Naive thymus-derived CD4-positive, alpha-beta T cell (primary cell): ENCODE measurements at regions of chr15 and their contacts with region 1.

Region 1: GRCh38 chr15:55407949-55408791 is at the starts of genes CCPG1 and PIERCE2:
- DNase-seq: peak; percentile 80 to 89 (median 85)
- ATAC-seq: peak; percentile 95
- H3K4me3 ChIP-seq: peak within 1 kb of the TSS; percentile 70
- H3K4me3 Mint-ChIP-seq: peak within 1 kb of the TSS; percentile 88 to 97 (median 94)
- H3K27ac ChIP-seq: peak within 1 kb of the TSS; percentile 86
- H3K27ac Mint-ChIP-seq: peak within 1 kb of the TSS; percentile 82 to 97 (median 89)
- H3K4me1 ChIP-seq: peaks cover 12 to 20% of the 10 kb centered on the region in 2 donors
- H3K4me1 Mint-ChIP-seq: peaks cover 18 to 52% (median 37%) of the 10 kb centered on the region in 7 donors
- H3K27me3 ChIP-seq: no peaks in the 10 kb centered on the region
- H3K27me3 Mint-ChIP-seq: peaks cover 0 to 2% (median 0%) of the 10 kb centered on the region in 5 donors
- total RNA-seq, gene CCPG1: 17.9 to 40.9 (median 28.4) TPM
- total RNA-seq, gene PIERCE2: 0.42 TPM in 1 of 5 experiments, not detected in the others

Region 2: DNA sequence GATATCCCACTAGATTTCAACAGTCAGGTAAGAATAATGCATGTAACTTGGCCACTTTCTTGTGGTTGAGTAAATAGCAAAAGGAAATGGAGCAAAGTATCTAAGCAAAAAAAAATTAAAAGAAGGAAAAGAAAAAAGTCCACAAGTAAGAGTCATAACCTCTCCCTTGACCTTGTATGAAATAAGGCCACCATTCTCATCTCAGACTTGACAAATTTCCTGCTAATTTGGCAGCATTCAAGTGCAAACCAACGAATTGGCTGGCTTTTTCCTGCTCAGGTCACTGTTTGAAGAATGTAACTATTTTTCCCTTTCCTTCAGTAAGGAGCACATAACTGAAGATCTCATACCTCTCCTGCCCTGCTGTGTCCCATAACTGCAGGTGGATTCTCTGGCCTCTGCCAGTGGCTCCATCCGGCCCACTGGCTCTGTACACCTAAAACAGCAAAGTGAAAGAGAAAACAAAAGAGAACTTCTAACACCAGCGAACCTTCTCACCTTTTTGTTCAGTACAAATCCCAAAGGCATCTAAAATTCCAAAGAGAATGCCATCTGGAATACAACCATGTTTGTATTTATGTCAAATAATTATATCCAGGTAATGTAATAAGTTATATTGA is 178.0 kb before region 1 on chr15:
- CTCF ChIA-PET with region 1: no interaction called
- POLR2A ChIA-PET with region 1: no interaction called
- intact Hi-C with region 1: no loop called
- DNase-seq: no peak
- ATAC-seq: no peak
- H3K4me3 ChIP-seq: no peak overlapping the region
- H3K4me3 Mint-ChIP-seq: peak overlapping the region in 2 of 10 donors; percentile 22 to 62
- H3K27ac ChIP-seq: no peak overlapping the region
- H3K27ac Mint-ChIP-seq: peak overlapping the region in 4 of 9 donors; percentile 9 to 61 (median 24)
- H3K4me1 ChIP-seq: peaks cover 3 to 15% of the 10 kb centered on the region in 2 donors
- H3K4me1 Mint-ChIP-seq: peaks cover 8 to 37% (median 16%) of the 10 kb centered on the region in 7 donors
- H3K27me3 ChIP-seq: no peaks in the 10 kb centered on the region
- H3K27me3 Mint-ChIP-seq: no peaks in the 10 kb centered on the region

Region 3: DNA sequence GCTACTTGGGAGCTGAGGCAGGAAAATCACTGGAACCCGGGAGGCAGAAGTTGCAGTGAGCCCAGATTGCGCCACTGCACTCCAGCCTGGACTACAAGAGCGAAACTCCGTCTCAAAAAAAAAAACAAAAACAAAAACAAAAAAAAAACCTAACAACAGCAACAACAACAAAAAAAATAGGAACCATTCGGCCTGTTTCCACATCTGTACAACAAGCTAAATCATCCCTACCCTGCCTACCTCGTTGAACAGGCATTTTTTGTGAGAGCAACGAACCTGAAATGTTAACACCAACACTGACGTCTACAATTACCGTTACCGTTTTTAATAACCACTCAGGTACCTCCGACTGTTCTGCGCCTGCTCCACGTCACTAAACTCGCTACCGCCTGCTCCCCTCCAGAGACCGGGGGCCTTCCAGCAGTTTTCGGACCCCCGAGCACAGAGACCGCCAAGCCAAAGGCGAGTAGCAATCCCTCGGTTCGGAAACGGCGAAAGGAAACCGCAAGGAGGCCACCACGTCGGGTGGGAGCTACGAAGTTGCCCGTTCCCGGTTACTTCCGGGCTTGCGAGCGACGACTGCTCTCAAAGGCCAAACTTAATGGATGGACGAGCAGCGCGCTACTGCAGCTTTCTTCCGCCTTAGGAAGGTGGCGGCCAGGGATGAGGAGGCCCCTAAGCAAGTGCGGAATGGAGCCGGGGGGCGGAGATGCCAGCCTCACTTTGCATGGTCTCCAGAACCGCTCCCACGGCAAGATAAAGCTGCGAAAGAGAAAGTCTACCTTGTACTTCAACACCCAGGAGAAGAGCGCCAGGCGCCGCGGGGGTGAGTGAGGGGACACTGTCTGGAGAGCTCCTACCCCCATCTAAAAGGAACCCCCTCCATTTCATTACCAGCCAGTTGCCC is 89.3 kb before region 1 on chr15 and contains the starts of genes PIGB and PIGBOS1:
- CTCF ChIA-PET with region 1: interaction called, 3 read pairs
- POLR2A ChIA-PET with region 1: interaction called, 13 read pairs
- intact Hi-C with region 1: loop called (anchors 1 kb)
- DNase-seq: peak; percentile 73 to 88 (median 84)
- ATAC-seq: peak; percentile 91
- H3K4me3 ChIP-seq: peak within 1 kb of the TSS; percentile 95
- H3K4me3 Mint-ChIP-seq: peak within 1 kb of the TSS; percentile 98 to 99 (median 98)
- H3K27ac ChIP-seq: peak within 1 kb of the TSS; percentile 98
- H3K27ac Mint-ChIP-seq: peak within 1 kb of the TSS; percentile 99 to 100 (median 100)
- H3K4me1 ChIP-seq: peaks cover 5 to 28% of the 10 kb centered on the region in 2 donors
- H3K4me1 Mint-ChIP-seq: peaks cover 41 to 86% (median 76%) of the 10 kb centered on the region in 7 donors
- H3K27me3 ChIP-seq: no peaks in the 10 kb centered on the region
- H3K27me3 Mint-ChIP-seq: no peaks in the 10 kb centered on the region
- total RNA-seq, gene PIGB: 21.4 to 30.2 (median 24.3) TPM
- total RNA-seq, gene PIGBOS1: 8.8 to 21.3 (median 12.5) TPM

Region 4: GRCh38 chr15:55389276-55389631 is 18.9 kb before region 1 on chr15:
- CTCF ChIA-PET with region 1: no interaction called
- POLR2A ChIA-PET with region 1: no interaction called
- intact Hi-C with region 1: loop called in 1 of 2 experiments (anchors 2 kb)
- DNase-seq: no peak
- ATAC-seq: no peak
- H3K4me3 ChIP-seq: no peak overlapping the region
- H3K4me3 Mint-ChIP-seq: no peak overlapping the region
- H3K27ac ChIP-seq: peak overlapping the region; percentile 8
- H3K27ac Mint-ChIP-seq: peak overlapping the region in 3 of 9 donors; percentile 14 to 56 (median 18)
- H3K4me1 ChIP-seq: no peaks in the 10 kb centered on the region
- H3K4me1 Mint-ChIP-seq: peaks cover 0 to 19% (median 5%) of the 10 kb centered on the region in 7 donors
- H3K27me3 ChIP-seq: no peaks in the 10 kb centered on the region
- H3K27me3 Mint-ChIP-seq: no peaks in the 10 kb centered on the region

Region 5: DNA sequence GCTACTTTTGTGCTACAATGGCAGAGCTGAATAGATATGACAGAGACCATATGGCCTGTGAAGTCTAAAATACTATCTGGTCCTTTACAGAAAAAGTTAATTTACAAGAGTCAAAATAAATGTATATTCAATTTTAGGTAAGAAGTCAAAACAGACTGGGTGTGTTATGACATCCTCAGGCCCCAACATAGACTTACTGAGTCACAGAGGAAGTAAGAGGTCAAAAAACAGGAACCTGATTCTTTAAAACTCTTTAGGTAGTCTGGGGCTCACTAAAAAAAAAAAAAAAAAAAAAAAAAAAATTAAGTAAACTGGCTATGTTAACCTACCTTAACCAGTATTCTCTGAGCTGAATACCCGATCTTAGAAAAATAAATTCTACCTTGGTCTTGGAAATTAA is 86.8 kb after region 1 on chr15:
- CTCF ChIA-PET with region 1: no interaction called
- POLR2A ChIA-PET with region 1: no interaction called
- intact Hi-C with region 1: loop called in 1 of 2 experiments (anchors 1 kb)
- DNase-seq: no peak
- ATAC-seq: peak; percentile 55
- H3K4me3 ChIP-seq: no peak overlapping the region
- H3K4me3 Mint-ChIP-seq: peak overlapping the region in 1 of 10 donors; percentile 53
- H3K27ac ChIP-seq: no peak overlapping the region
- H3K27ac Mint-ChIP-seq: peak overlapping the region in 3 of 9 donors; percentile 46 to 81 (median 59)
- H3K4me1 ChIP-seq: no peaks in the 10 kb centered on the region
- H3K4me1 Mint-ChIP-seq: peaks cover 0 to 17% (median 8%) of the 10 kb centered on the region in 7 donors
- H3K27me3 ChIP-seq: no peaks in the 10 kb centered on the region
- H3K27me3 Mint-ChIP-seq: no peaks in the 10 kb centered on the region